ENCODE measurements at regions of chr3 and their contacts with region 1.

Region 1: DNA sequence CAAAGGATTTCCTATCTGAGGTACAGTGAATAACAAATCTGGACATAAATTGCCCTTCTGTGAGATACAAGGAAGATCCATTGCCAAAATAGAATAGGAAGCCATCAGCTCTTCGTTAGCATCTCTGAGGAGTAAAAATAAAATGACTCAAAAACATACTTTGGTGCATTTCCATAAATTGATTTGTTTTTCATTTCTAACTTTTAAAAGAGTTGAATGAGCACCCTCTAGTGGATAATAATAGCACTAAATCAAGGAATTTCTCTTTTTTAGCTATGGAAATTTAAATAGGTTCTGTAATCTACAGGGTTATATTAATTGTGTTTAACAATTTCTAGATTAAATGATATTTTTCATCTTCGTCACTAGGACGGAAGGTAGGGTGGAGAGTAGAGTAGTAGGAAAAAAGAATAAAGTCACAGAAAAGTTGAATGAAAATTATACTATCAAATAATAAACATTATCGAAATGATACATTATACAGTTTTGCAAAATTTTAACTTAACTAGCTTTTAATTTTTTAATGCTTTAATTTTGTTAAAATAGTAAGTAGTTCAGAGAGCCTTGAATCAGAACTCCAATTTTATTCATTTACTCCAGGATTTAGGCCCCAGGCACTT is 6.4 kb downstream of the NSUN3 start:
- DNase-seq: no peak
- ATAC-seq: no peak
- H3K4me3 ChIP-seq: no peak overlapping the region
- H3K27ac ChIP-seq: no peak overlapping the region
- H3K4me1 ChIP-seq: peaks cover 0 to 1% of the 10 kb centered on the region in 2 donors
- H3K27me3 ChIP-seq: no peaks in the 10 kb centered on the region
- CTCF ChIP-seq: peak in 3 of 5 experiments; percentile 38 to 62 (median 55)
- POLR2A ChIP-seq: no peak

Region 2: DNA sequence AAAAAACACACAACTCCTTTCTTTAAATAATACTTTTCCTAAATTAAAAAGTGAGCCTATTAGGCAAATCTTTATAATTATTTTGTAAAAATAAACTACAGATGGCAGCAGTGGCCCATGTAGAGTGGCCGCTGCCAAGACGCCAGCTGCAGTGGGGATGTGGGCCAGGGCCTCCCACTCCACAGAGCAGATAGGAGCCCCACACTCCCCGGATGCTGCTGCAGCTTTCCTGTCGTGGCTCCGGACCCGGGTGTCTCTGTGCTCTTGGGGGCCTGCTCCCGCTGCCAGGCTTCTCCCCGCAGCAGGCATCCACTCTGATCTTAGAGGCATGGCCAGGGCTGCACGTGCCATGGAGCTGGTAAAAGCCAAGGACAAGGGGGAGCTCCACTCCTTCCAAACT is 163.1 kb before region 1 on chr3:
- in situ Hi-C with region 1: no loop called
- intact Hi-C with region 1: loop called (anchors 10 kb)
- DNase-seq: no peak
- ATAC-seq: no peak
- H3K4me3 ChIP-seq: no peak overlapping the region
- H3K27ac ChIP-seq: no peak overlapping the region
- H3K4me1 ChIP-seq: no peaks in the 10 kb centered on the region
- H3K27me3 ChIP-seq: no peaks in the 10 kb centered on the region
- CTCF ChIP-seq: no peak
- POLR2A ChIP-seq: no peak

Region 3: GRCh38 chr3:94004301-94004910 is 64.9 kb before region 1 on chr3:
- in situ Hi-C with region 1: loop called in 2 of 4 experiments (anchors 10 kb)
- intact Hi-C with region 1: loop called (anchors 1 kb)
- DNase-seq: no peak
- ATAC-seq: peak; percentile 73 to 84
- H3K4me3 ChIP-seq: peak overlapping the region; percentile 21 to 47 (median 30)
- H3K27ac ChIP-seq: no peak overlapping the region
- H3K4me1 ChIP-seq: peaks cover 0 to 4% of the 10 kb centered on the region in 2 donors
- H3K27me3 ChIP-seq: no peaks in the 10 kb centered on the region
- CTCF ChIP-seq: peak in 4 of 5 experiments; percentile 20 to 74 (median 65)
- POLR2A ChIP-seq: no peak

Region 4: DNA sequence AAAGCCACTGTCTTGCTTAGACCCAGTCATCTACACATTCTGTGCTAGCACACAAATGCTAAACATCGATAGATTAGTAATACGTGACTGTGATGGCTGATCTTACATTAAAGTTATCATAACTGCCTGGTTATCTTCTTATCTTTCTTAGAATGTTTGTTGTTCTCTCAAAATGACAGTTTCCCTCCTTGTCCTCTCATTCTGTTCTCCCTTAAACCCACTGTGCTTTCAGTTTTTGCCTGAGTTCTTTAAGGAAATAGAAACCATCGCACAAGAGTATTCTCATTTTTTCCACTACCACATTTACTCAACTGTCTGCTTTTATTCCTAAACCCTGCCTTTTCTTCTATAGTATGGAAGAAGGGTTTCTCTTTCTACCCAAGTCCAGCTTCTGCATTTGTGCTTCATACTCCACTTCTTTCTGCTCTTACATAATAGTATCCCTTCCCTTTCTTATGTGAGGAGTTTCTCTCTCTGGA is 58.0 kb before region 1 on chr3:
- in situ Hi-C with region 1: loop called in 3 of 4 experiments (anchors 10 kb)
- intact Hi-C with region 1: no loop called
- DNase-seq: no peak
- ATAC-seq: no peak
- H3K4me3 ChIP-seq: no peak overlapping the region
- H3K27ac ChIP-seq: no peak overlapping the region
- H3K4me1 ChIP-seq: no peaks in the 10 kb centered on the region
- H3K27me3 ChIP-seq: no peaks in the 10 kb centered on the region
- CTCF ChIP-seq: no peak
- POLR2A ChIP-seq: no peak

Region 5: DNA sequence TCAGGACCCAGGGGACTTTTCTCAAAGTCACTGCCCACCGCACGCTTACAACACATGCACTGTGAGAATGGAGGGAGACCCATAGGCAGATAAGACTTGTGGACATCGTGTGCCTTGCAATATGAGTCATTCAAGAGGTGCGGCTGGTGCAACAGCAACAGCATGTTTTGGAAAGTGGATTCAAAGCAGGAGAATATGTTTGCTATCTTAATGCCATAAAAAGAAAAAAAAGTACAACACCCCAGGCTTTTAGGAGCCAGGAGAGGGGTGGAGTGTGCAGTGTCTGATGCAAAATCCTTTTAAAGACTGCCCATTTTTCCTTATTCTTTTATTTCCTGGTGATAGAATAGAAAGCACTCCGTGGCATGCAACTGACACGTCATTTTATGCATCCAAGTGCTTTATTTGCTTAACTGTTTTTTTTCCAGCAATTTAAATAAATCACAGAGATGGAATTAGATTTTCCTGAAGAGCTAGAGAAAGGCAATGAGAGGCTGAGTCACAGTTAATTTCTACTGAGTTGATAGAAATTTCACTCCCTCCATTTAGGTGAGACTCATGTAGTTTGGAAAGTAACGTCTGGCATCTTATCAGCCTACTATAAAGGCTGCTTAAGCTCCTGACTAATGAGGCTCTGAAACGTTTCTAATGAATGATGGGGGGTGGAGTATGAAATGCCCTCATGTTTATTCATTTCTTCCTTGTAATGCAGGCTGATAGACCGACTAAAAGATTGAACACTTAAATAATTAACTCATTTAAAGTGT is 89.9 kb after region 1 on chr3:
- in situ Hi-C with region 1: no loop called
- intact Hi-C with region 1: no loop called
- DNase-seq: no peak
- ATAC-seq: no peak
- H3K4me3 ChIP-seq: no peak overlapping the region
- H3K27ac ChIP-seq: no peak overlapping the region
- H3K4me1 ChIP-seq: no peaks in the 10 kb centered on the region
- H3K27me3 ChIP-seq: no peaks in the 10 kb centered on the region
- CTCF ChIP-seq: no peak
- POLR2A ChIP-seq: no peak

Region 6: DNA sequence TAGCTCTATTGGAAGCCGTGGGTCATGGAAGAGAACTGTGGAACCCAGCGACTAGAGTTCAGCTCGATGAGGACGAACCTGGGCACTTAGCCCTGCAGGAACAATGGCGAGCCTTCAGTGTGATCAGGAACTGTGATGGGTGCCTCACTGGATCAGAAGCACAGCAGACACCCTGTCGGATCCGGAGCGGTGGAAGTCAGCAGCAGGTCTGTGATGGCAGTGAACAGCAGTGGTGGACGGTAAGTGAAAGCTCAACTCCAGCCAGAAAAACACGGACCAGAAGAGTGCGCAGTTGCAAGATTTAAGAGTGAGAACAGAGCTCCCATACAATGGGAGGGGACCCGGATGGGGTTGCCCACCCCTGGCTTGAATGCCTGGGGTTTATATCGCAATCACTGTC is 275.8 kb after region 1 on chr3:
- in situ Hi-C with region 1: no loop called
- intact Hi-C with region 1: no loop called
- DNase-seq: no peak
- ATAC-seq: no peak
- H3K4me3 ChIP-seq: no peak overlapping the region
- H3K27ac ChIP-seq: no peak overlapping the region
- H3K4me1 ChIP-seq: no peaks in the 10 kb centered on the region
- H3K27me3 ChIP-seq: no peaks in the 10 kb centered on the region
- CTCF ChIP-seq: no peak
- POLR2A ChIP-seq: no peak